ENCODE measurements at regions of chr17 and their contacts with region 1.

Region 1: DNA sequence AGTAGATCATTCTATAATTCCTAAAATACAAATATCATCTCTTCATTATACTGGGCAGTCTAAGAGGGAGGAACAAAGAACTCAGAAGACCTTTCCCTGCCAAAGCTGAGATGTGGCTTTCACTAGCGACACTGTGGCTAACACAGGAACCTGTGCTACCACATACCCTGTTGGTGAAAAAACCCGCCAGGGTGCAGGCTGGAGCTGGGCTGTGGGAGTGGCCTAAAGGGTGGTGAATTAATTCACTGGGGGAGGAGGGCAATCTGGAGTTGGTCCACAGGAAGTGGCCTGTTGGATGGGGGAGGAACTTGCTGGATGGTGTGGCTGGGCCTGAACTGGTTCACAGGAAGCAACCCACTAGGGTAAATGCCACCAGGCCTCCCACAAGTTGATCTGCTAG is 7.4 kb downstream of the ZNF594 start:
- DNase-seq: no peak
- ATAC-seq: no peak
- H3K4me3 Mint-ChIP-seq: no peak overlapping the region
- H3K27ac Mint-ChIP-seq: no peak overlapping the region
- H3K4me1 Mint-ChIP-seq: no peaks in the 10 kb centered on the region
- H3K27me3 Mint-ChIP-seq: no peaks in the 10 kb centered on the region

Region 2: DNA sequence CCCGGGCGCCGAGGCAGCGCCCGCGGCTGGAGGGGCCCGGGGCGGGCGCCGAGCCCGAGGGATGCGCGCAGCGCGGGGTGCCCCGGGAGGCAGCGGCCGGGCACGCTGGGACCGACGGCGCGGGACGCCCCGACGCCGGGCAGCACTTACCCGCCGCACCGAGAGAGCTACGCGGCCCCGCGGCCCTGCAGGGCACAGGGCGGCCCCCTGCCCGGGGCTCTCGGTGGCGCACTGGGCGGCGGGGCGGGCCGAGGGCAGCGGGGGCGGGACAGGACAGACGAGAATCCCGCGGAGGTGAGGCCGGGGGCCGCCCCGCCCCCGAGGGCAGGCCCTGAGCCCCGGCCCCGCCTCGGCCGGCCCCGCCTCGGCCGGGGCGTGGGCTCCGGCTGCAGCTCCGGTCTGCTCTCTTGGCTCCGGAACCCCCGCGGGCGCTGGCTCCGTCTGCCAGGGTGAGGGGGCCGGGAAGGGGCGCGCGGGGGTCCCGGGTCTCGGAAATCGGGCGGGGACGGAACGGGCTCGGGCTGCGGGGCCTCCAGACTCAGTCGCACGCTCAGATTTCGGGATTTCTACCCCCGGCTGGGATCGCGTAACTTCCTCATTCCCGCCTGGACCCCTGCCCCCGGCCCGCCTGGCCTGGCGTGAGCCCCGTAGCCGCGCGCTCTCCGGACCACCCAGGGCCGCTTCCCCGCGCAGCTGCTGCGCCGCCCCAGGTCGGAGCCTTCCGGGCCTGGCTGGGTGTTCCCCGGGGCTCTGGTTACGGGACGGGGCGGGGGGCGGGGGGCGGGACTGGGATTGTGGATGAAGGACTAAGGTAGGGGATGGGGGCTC is 377.3 kb before region 1 on chr17 and contains the start of gene PLD2:
- CTCF ChIA-PET with region 1: no interaction called
- POLR2A ChIA-PET with region 1: no interaction called
- intact Hi-C with region 1: no loop called
- DNase-seq: peak; percentile 93
- ATAC-seq: peak; percentile 98
- H3K4me3 Mint-ChIP-seq: peak within 1 kb of the TSS; percentile 73
- H3K27ac Mint-ChIP-seq: no peak within 1 kb of the TSS
- H3K4me1 Mint-ChIP-seq: peaks cover 7% of the 10 kb centered on the region
- H3K27me3 Mint-ChIP-seq: no peaks in the 10 kb centered on the region
- total RNA-seq, gene PLD2: 12.3 to 14.1 TPM

Region 3: GRCh38 chr17:5097101-5097834 is 87.0 kb before region 1 on chr17:
- CTCF ChIA-PET with region 1: no interaction called
- POLR2A ChIA-PET with region 1: no interaction called
- intact Hi-C with region 1: loop called (anchors 2 to 10 kb)
- DNase-seq: peak; percentile 60
- ATAC-seq: peak; percentile 55
- H3K4me3 Mint-ChIP-seq: peak overlapping the region; percentile 67
- H3K27ac Mint-ChIP-seq: no peak overlapping the region
- H3K4me1 Mint-ChIP-seq: peaks cover 10% of the 10 kb centered on the region
- H3K27me3 Mint-ChIP-seq: peaks cover 7% of the 10 kb centered on the region

Measured in activated CD4-positive, alpha-beta T cell treated with anti-CD3 and anti-CD28 coated beads for 36 hours (primary cell).